ENCODE measurements at regions of chr1 and their contacts with region 1.

Region 1: GRCh38 chr1:240719953-240720700 is 108.2 kb upstream of the GREM2 start:
- DNase-seq: no peak
- ATAC-seq: no peak
- H3K4me3 ChIP-seq: no peak overlapping the region
- H3K27ac ChIP-seq: no peak overlapping the region
- H3K4me1 ChIP-seq: no peaks in the 10 kb centered on the region
- H3K27me3 ChIP-seq: no peaks in the 10 kb centered on the region
- CTCF ChIP-seq: no peak
- EP300 ChIP-seq: no peak
- POLR2A ChIP-seq: no peak
- RAD21 ChIP-seq: no peak

Region 2: DNA sequence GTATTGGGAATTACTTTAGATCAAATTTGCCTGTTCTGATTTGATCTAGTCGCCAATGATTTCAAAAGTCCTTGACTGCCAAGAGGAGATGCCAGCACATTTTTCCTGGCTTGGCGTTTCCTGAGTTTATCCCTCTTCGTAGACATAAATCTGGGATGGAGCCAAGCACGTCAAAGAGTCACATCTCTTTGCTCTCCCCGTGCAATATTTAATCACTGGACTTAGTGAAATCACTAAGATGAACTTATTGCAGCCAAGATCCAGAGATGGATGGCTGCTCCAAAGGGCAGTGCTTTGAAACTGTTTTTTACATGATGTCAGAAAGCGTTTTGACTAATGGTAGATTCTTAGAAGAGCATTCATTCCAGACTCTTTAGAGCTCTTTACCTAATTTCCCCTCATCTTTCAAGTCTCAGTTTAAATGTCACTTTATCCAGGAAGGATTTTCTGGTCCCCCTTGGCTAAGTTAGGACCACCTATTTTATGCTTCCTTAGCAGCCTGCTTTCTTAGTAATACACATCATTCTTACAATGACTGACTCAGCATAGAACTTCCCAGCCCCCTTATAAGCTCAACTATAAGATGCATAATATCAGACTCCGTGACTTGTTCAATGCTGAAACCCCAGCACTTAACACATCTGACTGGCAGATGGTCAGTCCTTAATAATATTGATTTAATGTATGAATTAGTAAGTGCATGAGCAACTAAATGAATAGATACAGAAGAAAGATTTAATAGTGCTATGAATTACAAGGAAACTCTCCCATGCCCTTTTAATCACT is 13.8 kb before region 1 on chr1:
- CTCF ChIA-PET with region 1: no interaction called
- POLR2A ChIA-PET with region 1: no interaction called
- RAD21 ChIA-PET with region 1: no interaction called
- SMC1A ChIA-PET with region 1: no interaction called
- in situ Hi-C with region 1: no loop called
- intact Hi-C with region 1: no loop called
- DNase-seq: no peak
- ATAC-seq: no peak
- H3K4me3 ChIP-seq: no peak overlapping the region
- H3K27ac ChIP-seq: no peak overlapping the region
- H3K4me1 ChIP-seq: no peaks in the 10 kb centered on the region
- H3K27me3 ChIP-seq: no peaks in the 10 kb centered on the region
- CTCF ChIP-seq: no peak
- EP300 ChIP-seq: no peak
- POLR2A ChIP-seq: no peak
- RAD21 ChIP-seq: no peak

Region 3: GRCh38 chr1:240739139-240739538 is 19.0 kb after region 1 on chr1:
- CTCF ChIA-PET with region 1: no interaction called
- POLR2A ChIA-PET with region 1: no interaction called
- RAD21 ChIA-PET with region 1: no interaction called
- SMC1A ChIA-PET with region 1: no interaction called
- in situ Hi-C with region 1: no loop called
- intact Hi-C with region 1: no loop called
- DNase-seq: no peak
- ATAC-seq: no peak
- H3K4me3 ChIP-seq: no peak overlapping the region
- H3K27ac ChIP-seq: no peak overlapping the region
- H3K4me1 ChIP-seq: no peaks in the 10 kb centered on the region
- H3K27me3 ChIP-seq: no peaks in the 10 kb centered on the region
- CTCF ChIP-seq: no peak
- EP300 ChIP-seq: no peak
- POLR2A ChIP-seq: no peak
- RAD21 ChIP-seq: no peak

Region 4: DNA sequence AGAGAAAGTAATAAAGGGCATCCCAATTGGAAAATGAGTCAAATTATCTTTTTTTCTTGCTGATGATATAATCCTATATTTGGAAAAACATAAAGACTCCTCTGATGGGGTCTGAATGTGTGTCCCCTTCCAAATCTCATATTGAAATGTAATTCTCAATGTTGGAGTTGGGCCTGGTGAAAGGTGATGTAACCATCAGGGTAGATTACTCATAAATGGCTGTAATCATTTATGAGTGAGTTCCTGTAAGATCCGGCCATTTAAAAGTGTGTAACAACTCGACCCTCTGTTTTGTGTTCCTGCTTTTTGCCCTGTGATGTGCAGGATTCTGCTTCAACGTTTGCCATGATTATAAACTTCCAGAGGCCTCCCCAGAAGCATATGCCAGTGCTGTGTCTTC is 1323.0 kb after region 1 on chr1:
- CTCF ChIA-PET with region 1: no interaction called
- POLR2A ChIA-PET with region 1: interaction called, 10 read pairs
- RAD21 ChIA-PET with region 1: no interaction called
- SMC1A ChIA-PET with region 1: no interaction called
- in situ Hi-C with region 1: no loop called
- intact Hi-C with region 1: no loop called
- DNase-seq: no peak
- ATAC-seq: no peak
- H3K4me3 ChIP-seq: no peak overlapping the region
- H3K27ac ChIP-seq: no peak overlapping the region
- H3K4me1 ChIP-seq: no peaks in the 10 kb centered on the region
- H3K27me3 ChIP-seq: no peaks in the 10 kb centered on the region
- CTCF ChIP-seq: no peak
- EP300 ChIP-seq: no peak
- POLR2A ChIP-seq: no peak
- RAD21 ChIP-seq: no peak

Measured in GM12878 (cell line).